ENCODE measurements at regions of chr19 and their contacts with region 1.

Region 1: GRCh38 chr19:46766569-46767317 is 20.5 kb upstream of the STRN4 start:
- DNase-seq: peak; percentile 77
- ATAC-seq: peak; percentile 81
- H3K4me3 Mint-ChIP-seq: no peak overlapping the region
- H3K27ac Mint-ChIP-seq: no peak overlapping the region
- H3K4me1 Mint-ChIP-seq: peaks cover 4% of the 10 kb centered on the region
- H3K27me3 Mint-ChIP-seq: no peaks in the 10 kb centered on the region

Region 2: DNA sequence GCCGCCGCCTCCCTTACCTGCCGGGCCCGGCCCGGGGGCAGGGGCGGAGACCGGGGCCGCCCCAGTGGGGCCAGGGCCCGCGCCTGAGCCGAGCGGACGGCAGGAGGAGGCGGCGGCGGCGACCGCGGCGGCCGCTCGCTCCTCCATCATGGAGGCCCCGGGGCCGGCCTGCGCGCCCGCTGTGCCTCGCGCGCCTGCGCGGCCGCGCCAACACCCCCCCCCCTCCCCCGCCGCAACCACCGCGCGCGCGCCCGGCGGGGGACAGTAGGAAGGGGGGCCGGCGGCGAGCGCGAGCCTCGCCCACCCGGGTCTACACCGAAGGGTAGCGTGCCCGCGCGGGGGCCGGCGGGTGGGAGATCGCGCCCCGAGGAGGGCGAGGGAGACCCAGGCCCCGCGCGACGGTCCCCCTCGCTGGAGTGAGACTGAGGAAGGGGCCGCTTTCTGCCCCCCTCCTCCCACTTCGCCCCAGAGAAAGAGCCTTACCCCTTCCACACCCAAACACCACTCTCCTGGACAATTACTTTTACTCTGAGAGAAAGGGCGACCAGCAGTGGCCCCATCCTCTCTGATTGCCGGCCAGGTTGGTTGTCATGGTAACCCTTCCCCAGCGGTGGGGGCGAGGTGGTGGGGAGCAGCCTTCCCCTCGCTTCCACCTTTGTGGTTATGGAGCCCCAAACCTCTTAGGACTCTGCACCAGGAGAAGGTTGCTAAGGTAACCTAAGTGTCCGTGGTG is 20.3 kb before region 1 on chr19 and contains the start of gene STRN4:
- CTCF ChIA-PET with region 1: interaction called, 23 read pairs
- DNase-seq: peak; percentile 68
- ATAC-seq: peak; percentile 77
- H3K4me3 Mint-ChIP-seq: peak within 1 kb of the TSS; percentile 94
- H3K27ac Mint-ChIP-seq: peak within 1 kb of the TSS; percentile 86
- H3K4me1 Mint-ChIP-seq: peaks cover 52% of the 10 kb centered on the region
- H3K27me3 Mint-ChIP-seq: no peaks in the 10 kb centered on the region
- total RNA-seq, gene STRN4: 93.0 to 95.8 TPM

Region 3: DNA sequence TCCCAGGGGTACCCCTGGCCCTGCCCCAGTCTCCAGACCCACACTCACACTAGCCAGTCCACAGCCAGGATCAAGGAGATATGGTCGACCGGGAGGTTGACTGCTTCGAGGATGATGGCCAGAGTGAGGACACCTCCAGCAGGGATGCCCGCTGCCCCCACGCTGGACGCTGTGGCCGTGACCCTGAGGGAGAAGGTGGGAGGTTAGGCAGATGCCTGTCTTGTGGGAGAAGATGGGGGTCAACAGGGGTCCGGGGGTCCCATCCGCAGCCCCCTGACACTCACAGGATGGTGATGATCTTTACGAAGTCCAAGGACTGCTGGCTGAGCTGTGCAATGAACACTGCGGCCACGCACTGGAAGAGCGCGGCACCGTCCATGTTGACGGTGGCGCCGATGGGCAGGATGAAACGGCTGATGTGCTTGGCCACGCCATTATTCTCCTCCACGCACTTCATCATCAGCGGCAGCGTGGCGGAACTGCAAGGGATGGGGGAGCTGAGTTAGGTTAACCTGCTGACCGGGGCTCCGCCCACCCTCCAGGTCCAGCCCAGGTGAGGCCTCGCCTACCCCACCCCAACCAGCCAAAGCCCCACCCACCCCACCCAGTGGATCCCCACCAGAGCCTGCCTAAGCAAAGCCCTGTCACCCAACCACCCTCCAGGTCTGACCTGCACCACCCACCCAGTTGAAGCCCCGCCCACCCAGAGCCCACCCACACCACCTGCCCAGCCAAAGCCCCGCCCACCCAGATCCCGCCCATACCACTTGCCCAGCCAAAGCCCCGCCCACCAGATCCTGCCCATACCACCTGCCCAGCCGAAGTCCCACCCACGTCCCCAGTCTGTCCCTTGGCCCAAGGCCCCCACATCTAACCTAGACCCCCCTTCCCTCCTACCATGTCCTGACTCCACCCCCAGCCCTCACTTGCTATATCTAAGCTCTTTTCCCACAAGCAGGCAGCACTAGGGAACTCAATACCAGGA is 10.5 kb after region 1 on chr19:
- CTCF ChIA-PET with region 1: interaction called, 58 read pairs
- DNase-seq: no peak
- ATAC-seq: no peak
- H3K4me3 Mint-ChIP-seq: no peak overlapping the region
- H3K27ac Mint-ChIP-seq: peak overlapping the region; percentile 18
- H3K4me1 Mint-ChIP-seq: peaks cover 42% of the 10 kb centered on the region
- H3K27me3 Mint-ChIP-seq: no peaks in the 10 kb centered on the region

Region 4: GRCh38 chr19:46788262-46788967 is 21.7 kb after region 1 on chr19 and contains the start of gene SLC1A5:
- CTCF ChIA-PET with region 1: interaction called, 58 read pairs
- DNase-seq: peak; percentile 99
- ATAC-seq: peak; percentile 72
- H3K4me3 Mint-ChIP-seq: peak within 1 kb of the TSS; percentile 90
- H3K27ac Mint-ChIP-seq: peak within 1 kb of the TSS; percentile 97
- H3K4me1 Mint-ChIP-seq: peaks cover 49% of the 10 kb centered on the region
- H3K27me3 Mint-ChIP-seq: no peaks in the 10 kb centered on the region
- total RNA-seq, gene SLC1A5: 196 to 259 TPM

Region 5: GRCh38 chr19:46821498-46822409 is 55.0 kb after region 1 on chr19:
- CTCF ChIA-PET with region 1: interaction called, 30 read pairs
- DNase-seq: peak; percentile 85
- ATAC-seq: peak; percentile 89
- H3K4me3 Mint-ChIP-seq: peak overlapping the region; percentile 18
- H3K27ac Mint-ChIP-seq: peak overlapping the region; percentile 83
- H3K4me1 Mint-ChIP-seq: peaks cover 57% of the 10 kb centered on the region
- H3K27me3 Mint-ChIP-seq: no peaks in the 10 kb centered on the region

Region 6: GRCh38 chr19:46828484-46828883 is 61.7 kb after region 1 on chr19:
- CTCF ChIA-PET with region 1: interaction called, 30 read pairs
- DNase-seq: peak; percentile 55
- ATAC-seq: no peak
- H3K4me3 Mint-ChIP-seq: no peak overlapping the region
- H3K27ac Mint-ChIP-seq: no peak overlapping the region
- H3K4me1 Mint-ChIP-seq: peaks cover 23% of the 10 kb centered on the region
- H3K27me3 Mint-ChIP-seq: no peaks in the 10 kb centered on the region

Region 7: GRCh38 chr19:46840136-46840942 is 73.6 kb after region 1 on chr19:
- CTCF ChIA-PET with region 1: interaction called, 41 read pairs
- DNase-seq: peak; percentile 63
- ATAC-seq: peak; percentile 82
- H3K4me3 Mint-ChIP-seq: no peak overlapping the region
- H3K27ac Mint-ChIP-seq: no peak overlapping the region
- H3K4me1 Mint-ChIP-seq: peaks cover 3% of the 10 kb centered on the region
- H3K27me3 Mint-ChIP-seq: no peaks in the 10 kb centered on the region

Measured in activated CD8-positive, alpha-beta memory T cell treated with anti-CD3 and anti-CD28 coated beads, Interleukin-2, amount 10 ng/mL, durations not matched to agents 7 days and 5 days (primary cell).